ENCODE measurements at regions of chr12 and their contacts with region 1.

Region 1: DNA sequence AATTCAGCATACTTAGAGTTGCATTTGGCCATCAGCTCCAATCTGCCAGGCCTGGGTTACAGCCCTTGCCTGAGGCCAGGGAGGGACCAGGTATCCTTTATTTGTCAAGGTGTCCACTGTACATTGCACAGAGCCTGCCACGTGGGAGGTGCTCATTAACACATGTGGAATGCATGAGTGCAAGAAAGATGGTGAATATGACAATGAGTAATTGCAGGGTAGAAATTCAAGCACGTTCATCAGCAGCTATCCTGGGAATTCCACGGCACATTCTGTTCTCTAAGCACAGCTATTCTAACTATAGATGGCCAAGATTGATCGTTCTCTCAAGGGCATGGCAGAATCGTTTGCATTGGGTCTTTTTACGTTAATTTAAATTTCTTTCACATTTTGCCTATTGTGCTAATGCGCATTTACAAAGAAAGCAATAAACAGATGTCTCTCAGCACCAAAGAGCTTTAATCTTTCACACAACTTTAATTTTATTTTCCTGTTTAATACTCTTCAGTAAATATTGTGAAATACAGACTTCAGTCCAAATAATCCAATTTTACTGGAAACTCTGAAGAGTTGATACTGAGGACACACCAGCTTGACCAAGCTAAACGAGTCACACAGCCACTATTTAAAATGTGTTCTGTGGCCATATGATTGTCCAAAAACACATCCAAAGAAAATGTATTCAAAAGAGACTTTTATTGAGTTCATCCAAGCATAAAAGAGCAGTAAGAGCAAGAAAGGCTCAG is 1025.7 kb upstream of the TMEM132C start:
- DNase-seq: peak; percentile 90
- H3K4me3 ChIP-seq: no peak overlapping the region
- H3K27ac ChIP-seq: peak overlapping the region; percentile 76
- H3K4me1 ChIP-seq: peaks cover 45% of the 10 kb centered on the region
- H3K27me3 ChIP-seq: no peaks in the 10 kb centered on the region
- CTCF ChIP-seq: no peak

Region 2: DNA sequence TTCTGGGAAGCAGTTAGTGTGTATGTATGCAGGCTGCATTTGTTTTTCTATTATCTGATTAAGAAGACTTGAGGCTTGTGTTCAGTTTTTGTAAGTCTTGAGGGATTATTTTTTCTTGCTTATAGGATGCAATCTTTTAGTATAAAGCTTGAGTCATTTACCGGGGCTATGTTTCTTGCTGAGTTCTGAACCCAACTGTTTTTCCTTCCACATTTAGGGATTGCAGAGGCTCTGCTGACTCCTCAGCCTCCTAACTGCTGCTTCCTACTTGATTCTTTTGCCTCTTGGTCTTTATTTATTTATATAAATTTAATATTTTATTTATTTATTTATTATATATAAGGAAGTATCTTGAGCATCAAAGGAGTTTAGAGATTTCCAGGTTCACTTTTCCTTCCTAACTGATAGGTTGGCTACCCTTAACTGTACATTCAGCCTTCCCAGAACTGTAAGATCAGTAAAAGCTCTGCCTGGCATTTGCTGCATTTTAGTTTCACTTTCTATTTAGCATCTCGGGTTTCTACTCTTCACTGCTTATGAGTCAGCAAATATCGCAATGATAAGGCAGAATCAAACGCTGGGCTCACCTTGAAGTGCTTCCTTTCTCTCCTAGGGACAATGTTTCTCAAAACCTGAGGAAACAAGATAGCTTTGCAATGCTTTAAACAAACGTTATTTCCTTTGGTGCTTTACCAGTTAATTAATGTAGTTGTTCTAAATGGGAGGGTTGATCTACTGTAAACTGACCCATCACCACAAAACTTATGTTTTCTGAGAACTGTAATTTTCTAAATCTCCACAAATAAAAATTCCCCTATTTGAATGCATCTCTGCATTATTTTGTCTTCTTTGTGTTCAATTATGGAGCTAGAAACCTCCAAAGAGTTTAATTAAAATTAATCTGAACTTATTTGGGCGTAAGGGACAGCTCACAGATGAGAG is 158.0 kb before region 1 on chr12:
- CTCF ChIA-PET with region 1: no interaction called
- dilution Hi-C with region 1: no loop called
- in situ Hi-C with region 1: no loop called
- intact Hi-C with region 1: no loop called
- DNase-seq: peak; percentile 78
- H3K4me3 ChIP-seq: peak overlapping the region; percentile 15 to 42 (median 42)
- H3K27ac ChIP-seq: peak overlapping the region; percentile 77
- H3K4me1 ChIP-seq: peaks cover 3% of the 10 kb centered on the region
- H3K27me3 ChIP-seq: no peaks in the 10 kb centered on the region
- CTCF ChIP-seq: no peak

Region 3: GRCh38 chr12:127165567-127166392 is 75.5 kb before region 1 on chr12:
- CTCF ChIA-PET with region 1: no interaction called
- dilution Hi-C with region 1: no loop called
- in situ Hi-C with region 1: no loop called
- intact Hi-C with region 1: loop called (anchors 5 kb)
- DNase-seq: peak; percentile 78
- H3K4me3 ChIP-seq: peak overlapping the region in 2 of 3 experiments; percentile 41 to 55
- H3K27ac ChIP-seq: peak overlapping the region; percentile 69
- H3K4me1 ChIP-seq: peaks cover 27% of the 10 kb centered on the region
- H3K27me3 ChIP-seq: no peaks in the 10 kb centered on the region
- CTCF ChIP-seq: no peak

Region 4: DNA sequence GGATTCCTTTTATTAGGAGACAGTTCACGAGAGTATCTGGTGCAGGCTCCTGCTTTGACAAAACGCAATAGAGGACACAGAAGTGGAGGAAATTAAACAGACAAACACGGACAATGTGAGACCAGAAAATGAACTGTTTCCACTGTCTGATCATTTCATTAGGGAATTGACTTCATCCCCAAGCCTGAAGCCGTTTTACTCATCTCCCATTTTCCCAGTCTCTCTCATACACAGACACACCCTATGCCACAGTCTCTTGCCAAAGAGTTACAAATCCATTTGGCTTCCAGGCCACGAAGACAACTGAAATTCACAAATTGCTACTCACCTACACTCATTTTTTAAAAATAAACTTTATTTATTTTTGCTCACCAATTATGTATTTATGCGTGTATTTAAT is 62.1 kb before region 1 on chr12:
- CTCF ChIA-PET with region 1: no interaction called
- dilution Hi-C with region 1: no loop called
- in situ Hi-C with region 1: no loop called
- intact Hi-C with region 1: no loop called
- DNase-seq: peak; percentile 21
- H3K4me3 ChIP-seq: no peak overlapping the region
- H3K27ac ChIP-seq: no peak overlapping the region
- H3K4me1 ChIP-seq: no peaks in the 10 kb centered on the region
- H3K27me3 ChIP-seq: no peaks in the 10 kb centered on the region
- CTCF ChIP-seq: no peak

Region 5: GRCh38 chr12:127230843-127231260 is 10.4 kb before region 1 on chr12:
- CTCF ChIA-PET with region 1: interaction called, 4 read pairs
- dilution Hi-C with region 1: no loop called
- in situ Hi-C with region 1: no loop called
- intact Hi-C with region 1: loop called (anchors 1 kb)
- DNase-seq: peak; percentile 99
- H3K4me3 ChIP-seq: no peak overlapping the region
- H3K27ac ChIP-seq: peak overlapping the region; percentile 88
- H3K4me1 ChIP-seq: peaks cover 35% of the 10 kb centered on the region
- H3K27me3 ChIP-seq: no peaks in the 10 kb centered on the region
- CTCF ChIP-seq: no peak

Region 6: DNA sequence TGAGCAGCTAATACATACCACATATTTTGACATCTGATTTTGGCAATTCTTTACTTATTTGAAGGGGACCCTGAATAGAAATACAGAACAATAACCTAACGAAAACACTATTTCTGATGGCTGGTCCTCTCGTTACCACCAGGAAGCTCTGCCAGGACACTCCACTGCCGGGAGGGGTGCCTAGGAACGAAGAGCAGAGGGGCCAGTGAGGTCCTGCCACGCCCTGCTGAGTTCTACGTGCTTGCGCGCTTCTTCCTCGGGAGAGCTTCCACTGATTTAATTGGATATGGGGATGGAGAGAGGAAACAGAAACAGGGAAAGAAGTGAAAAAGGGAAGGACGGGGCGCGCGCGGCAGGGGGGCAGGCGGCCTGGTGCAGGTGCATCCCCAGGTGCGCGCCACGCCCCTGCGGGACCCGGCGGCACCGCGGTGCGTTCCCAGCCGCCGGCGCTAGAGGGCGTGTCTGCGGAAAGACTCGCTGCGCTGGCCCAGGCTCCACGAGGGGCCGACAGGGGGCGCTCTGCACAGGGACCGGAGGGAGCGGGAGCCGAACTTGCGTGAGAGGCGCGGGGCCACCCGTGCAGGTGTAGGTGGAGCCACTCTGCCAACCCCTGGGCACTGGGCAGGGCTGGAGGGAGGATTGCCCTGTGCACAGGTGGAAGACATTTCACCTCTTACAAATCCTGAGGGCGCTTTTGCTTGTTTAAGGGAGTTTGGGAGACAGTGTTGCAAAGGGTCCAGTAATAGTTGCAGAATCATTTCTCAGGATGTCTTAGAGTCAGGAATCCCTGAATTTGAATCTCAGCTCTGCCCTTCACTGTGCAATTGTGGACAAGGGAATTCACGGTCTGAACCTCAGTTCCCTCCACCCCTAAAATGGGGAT is 39.4 kb after region 1 on chr12:
- CTCF ChIA-PET with region 1: no interaction called
- dilution Hi-C with region 1: loop called (anchors 5 kb)
- in situ Hi-C with region 1: no loop called
- intact Hi-C with region 1: loop called (anchors 2 kb)
- DNase-seq: peak; percentile 39
- H3K4me3 ChIP-seq: no peak overlapping the region
- H3K27ac ChIP-seq: no peak overlapping the region
- H3K4me1 ChIP-seq: peaks cover 17% of the 10 kb centered on the region
- H3K27me3 ChIP-seq: no peaks in the 10 kb centered on the region
- CTCF ChIP-seq: peak; percentile 91 to 92

Region 7: GRCh38 chr12:127355061-127355841 is 114.0 kb after region 1 on chr12:
- CTCF ChIA-PET with region 1: no interaction called
- dilution Hi-C with region 1: no loop called
- in situ Hi-C with region 1: no loop called
- intact Hi-C with region 1: no loop called
- DNase-seq: peak; percentile 17
- H3K4me3 ChIP-seq: no peak overlapping the region
- H3K27ac ChIP-seq: no peak overlapping the region
- H3K4me1 ChIP-seq: no peaks in the 10 kb centered on the region
- H3K27me3 ChIP-seq: no peaks in the 10 kb centered on the region
- CTCF ChIP-seq: peak; percentile 87 to 95